ENCODE measurements at regions of chr13 and their contacts with region 1.

Region 1: GRCh38 chr13:109297628-109298027 is 488.8 kb downstream of the IRS2 start:
- DNase-seq: no peak
- ATAC-seq: no peak

Region 2: GRCh38 chr13:108957369-108958012 is 340.1 kb before region 1 on chr13:
- intact Hi-C with region 1: no loop called
- DNase-seq: no peak
- ATAC-seq: peak in 1 of 2 donors; percentile 81

Region 3: GRCh38 chr13:109000207-109000606 is 297.4 kb before region 1 on chr13:
- intact Hi-C with region 1: no loop called
- DNase-seq: no peak
- ATAC-seq: no peak

Region 4: GRCh38 chr13:109400209-109400608 is 102.6 kb after region 1 on chr13:
- intact Hi-C with region 1: loop called in 1 of 2 experiments (anchors 10 kb)
- DNase-seq: peak; percentile 37
- ATAC-seq: peak in 1 of 2 donors; percentile 85